ENCODE measurements at regions of chr3 and their contacts with region 1.

Region 1: DNA sequence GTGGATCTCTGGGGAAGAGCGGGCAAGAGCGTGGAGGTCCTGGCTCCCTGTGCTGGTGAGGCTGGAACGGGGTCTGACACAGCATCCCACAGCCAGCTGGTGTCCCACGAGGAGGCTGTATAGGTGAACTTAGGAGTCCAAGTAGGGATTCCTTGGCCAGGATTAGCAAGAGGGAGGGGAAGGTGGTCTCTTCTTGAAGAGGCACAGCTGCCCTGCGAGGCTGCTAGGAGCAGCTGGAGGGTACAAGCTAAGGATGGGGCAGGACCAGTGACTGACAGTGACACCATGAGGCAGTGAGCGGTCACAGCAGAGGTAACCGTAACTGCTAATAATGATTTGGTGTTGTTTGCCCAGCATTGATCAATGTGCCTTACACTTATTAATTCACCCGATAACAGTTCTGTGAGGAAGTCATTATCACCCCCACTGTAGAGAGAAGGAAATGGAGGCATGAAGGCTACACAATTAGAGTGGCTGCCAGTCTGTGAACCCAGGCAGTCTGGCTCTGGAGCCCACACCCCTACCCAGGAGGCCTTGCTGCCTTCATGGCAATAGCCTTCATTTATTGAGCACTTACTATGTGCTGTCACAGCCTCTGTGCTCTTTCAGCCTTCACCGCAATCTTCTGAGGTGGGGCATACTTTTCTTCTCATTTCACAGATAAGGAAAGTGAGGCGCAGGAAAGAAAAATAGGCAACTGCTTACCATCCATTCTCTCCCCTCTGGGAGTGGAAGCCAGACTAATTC is 59.4 kb downstream of the TMEM44 start:
- DNase-seq: peak; percentile 58
- ATAC-seq: peak; percentile 45 to 70

Region 2: DNA sequence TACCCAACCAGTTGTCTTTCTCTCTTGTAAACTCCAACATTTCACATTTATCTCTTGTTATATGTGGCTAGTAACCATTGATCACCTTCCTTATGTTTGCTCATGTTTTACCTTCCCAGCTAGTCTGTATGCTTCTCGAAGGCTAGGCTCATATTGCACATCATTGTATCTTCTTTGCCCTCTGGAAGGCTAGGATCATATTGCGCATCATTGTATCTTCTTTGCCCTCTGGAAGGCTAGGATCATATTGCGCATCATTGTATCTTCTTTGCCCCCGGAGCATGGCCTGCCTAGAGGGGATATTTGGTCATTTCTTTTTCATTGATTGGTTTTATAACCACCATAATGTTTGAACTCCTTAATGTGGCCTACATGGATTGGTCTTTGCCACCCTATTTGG is 47.7 kb before region 1 on chr3:
- intact Hi-C with region 1: loop called in 1 of 2 experiments (anchors 5 kb)
- DNase-seq: no peak
- ATAC-seq: no peak